CD4-positive, alpha-beta memory T cell (primary cell): ENCODE measurements at regions of chr5 and their contacts with region 1.

Region 1: DNA sequence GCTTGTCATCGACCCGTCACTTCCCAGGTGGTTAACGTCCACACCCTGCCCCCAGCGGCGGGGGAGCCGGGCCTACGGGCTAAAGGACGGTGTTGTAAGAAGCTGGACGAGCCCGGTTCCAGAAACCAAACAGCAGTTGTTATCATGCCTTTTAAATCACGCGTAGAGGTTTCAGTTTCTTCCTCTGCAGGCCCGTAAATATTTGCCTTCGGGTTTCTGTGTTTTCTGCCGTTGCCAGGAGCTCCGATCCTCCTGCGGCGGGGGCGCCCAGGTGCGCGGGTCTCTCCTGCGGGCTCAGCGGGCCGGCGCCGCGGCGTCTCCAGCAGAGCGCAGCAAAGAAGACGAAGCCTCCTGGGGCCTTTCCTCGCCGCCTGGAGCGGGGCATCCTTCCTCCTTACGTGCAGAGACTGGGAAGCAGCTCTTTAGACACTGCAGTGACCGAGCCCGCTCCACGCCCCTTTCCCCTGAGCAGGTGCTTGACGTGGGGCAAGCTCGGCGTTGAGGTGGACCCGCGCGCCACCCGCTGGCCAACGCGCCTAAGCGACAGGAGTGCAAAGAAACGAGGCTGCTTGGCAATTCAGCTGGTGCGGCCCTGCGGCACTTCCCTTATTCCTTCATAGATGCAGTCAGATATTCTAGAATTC is 21.8 kb upstream of the TTC1 start:
- DNase-seq: peak; percentile 67 to 76 (median 72)
- H3K4me3 ChIP-seq: peak overlapping the region in 1 of 2 donors; percentile 44
- H3K4me3 Mint-ChIP-seq: peak overlapping the region; percentile 52 to 79 (median 72)
- H3K27ac ChIP-seq: no peak overlapping the region
- H3K27ac Mint-ChIP-seq: peak overlapping the region in 4 of 7 donors; percentile 25 to 66 (median 45)
- H3K4me1 ChIP-seq: no peaks in the 10 kb centered on the region
- H3K4me1 Mint-ChIP-seq: peaks cover 0 to 3% (median 0%) of the 10 kb centered on the region in 4 donors
- H3K27me3 ChIP-seq: no peaks in the 10 kb centered on the region
- H3K27me3 Mint-ChIP-seq: peaks cover 14 to 15% of the 10 kb centered on the region in 2 donors

Region 2: DNA sequence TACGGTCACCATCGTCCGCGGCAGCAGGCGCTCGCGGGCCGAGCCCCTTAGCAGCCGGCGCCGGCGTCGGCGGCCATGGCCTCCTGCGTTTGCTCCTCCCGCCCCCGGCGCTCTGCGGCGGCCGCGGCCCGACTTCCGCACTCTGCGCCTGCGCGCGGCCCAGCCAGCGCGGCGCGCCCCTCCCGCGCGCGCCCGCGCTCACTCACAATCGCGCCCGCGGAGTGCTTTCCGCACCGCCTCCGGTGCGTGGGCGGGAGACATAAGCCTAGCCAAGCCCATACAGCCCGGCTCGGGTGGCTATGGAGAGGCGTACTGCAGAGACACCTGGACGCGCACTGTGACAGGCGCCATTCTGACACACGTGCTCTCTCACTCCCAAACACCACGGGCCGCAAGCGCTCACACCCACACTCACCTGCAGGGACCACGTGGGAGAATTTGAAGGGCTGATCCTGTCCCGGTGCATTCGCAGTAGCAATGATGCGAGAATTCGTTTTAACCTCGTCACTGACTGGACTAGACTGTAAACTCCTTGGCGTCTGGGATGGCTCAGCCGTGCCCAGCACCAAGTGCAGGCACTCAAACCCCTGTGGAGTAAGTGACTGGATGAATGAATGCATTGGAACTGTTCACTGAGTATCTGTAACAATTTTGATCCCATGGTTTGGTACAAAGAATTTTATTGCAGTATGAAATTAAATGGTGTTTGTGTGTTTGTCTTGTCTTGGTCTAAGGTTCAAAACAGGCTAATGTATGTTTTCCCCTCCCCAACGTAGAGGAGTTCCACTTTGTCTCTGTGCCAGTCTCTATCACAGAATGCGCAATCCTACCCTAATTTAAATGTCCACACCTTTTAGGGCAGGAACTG is 777.5 kb before region 1 on chr5 and contains the start of gene RNF145:
- CTCF ChIA-PET with region 1: interaction called, 8 read pairs
- POLR2A ChIA-PET with region 1: no interaction called
- intact Hi-C with region 1: loop called (anchors 2 kb)
- DNase-seq: peak; percentile 93 to 96 (median 94)
- H3K4me3 ChIP-seq: peak within 1 kb of the TSS; percentile 82 to 85
- H3K4me3 Mint-ChIP-seq: peak within 1 kb of the TSS; percentile 93 to 99 (median 96)
- H3K27ac ChIP-seq: peak within 1 kb of the TSS; percentile 87
- H3K27ac Mint-ChIP-seq: peak within 1 kb of the TSS; percentile 96 to 100 (median 98)
- H3K4me1 ChIP-seq: peaks cover 33% of the 10 kb centered on the region
- H3K4me1 Mint-ChIP-seq: peaks cover 32 to 55% (median 38%) of the 10 kb centered on the region in 4 donors
- H3K27me3 ChIP-seq: no peaks in the 10 kb centered on the region
- H3K27me3 Mint-ChIP-seq: peaks cover 0 to 1% of the 10 kb centered on the region in 2 donors
- total RNA-seq, gene RNF145: 62.4 to 67.8 TPM

Region 3: GRCh38 chr5:159286420-159287035 is 700.6 kb before region 1 on chr5:
- CTCF ChIA-PET with region 1: interaction called, 90 read pairs
- POLR2A ChIA-PET with region 1: interaction called, 8 read pairs
- intact Hi-C with region 1: no loop called
- DNase-seq: peak in 4 of 5 donors; percentile 29 to 40 (median 33)
- H3K4me3 ChIP-seq: no peak overlapping the region
- H3K4me3 Mint-ChIP-seq: no peak overlapping the region
- H3K27ac ChIP-seq: no peak overlapping the region
- H3K27ac Mint-ChIP-seq: no peak overlapping the region
- H3K4me1 ChIP-seq: no peaks in the 10 kb centered on the region
- H3K4me1 Mint-ChIP-seq: no peaks in the 10 kb centered on the region
- H3K27me3 ChIP-seq: no peaks in the 10 kb centered on the region
- H3K27me3 Mint-ChIP-seq: no peaks in the 10 kb centered on the region

Region 4: GRCh38 chr5:159341914-159342313 is 645.2 kb before region 1 on chr5:
- CTCF ChIA-PET with region 1: interaction called, 13 read pairs
- POLR2A ChIA-PET with region 1: no interaction called
- intact Hi-C with region 1: no loop called
- DNase-seq: peak; percentile 74 to 92 (median 79)
- H3K4me3 ChIP-seq: no peak overlapping the region
- H3K4me3 Mint-ChIP-seq: peak overlapping the region in 7 of 8 donors; percentile 28 to 88 (median 47)
- H3K27ac ChIP-seq: no peak overlapping the region
- H3K27ac Mint-ChIP-seq: peak overlapping the region; percentile 79 to 98 (median 87)
- H3K4me1 ChIP-seq: peaks cover 66% of the 10 kb centered on the region
- H3K4me1 Mint-ChIP-seq: peaks cover 54 to 89% (median 67%) of the 10 kb centered on the region in 4 donors
- H3K27me3 ChIP-seq: no peaks in the 10 kb centered on the region
- H3K27me3 Mint-ChIP-seq: no peaks in the 10 kb centered on the region

Region 5: GRCh38 chr5:159515909-159516415 is 471.2 kb before region 1 on chr5:
- CTCF ChIA-PET with region 1: interaction called, 5 read pairs
- POLR2A ChIA-PET with region 1: no interaction called
- intact Hi-C with region 1: loop called (anchors 5 kb)
- DNase-seq: peak; percentile 41 to 59 (median 56)
- H3K4me3 ChIP-seq: no peak overlapping the region
- H3K4me3 Mint-ChIP-seq: peak overlapping the region in 2 of 8 donors; percentile 30 to 71
- H3K27ac ChIP-seq: no peak overlapping the region
- H3K27ac Mint-ChIP-seq: no peak overlapping the region
- H3K4me1 ChIP-seq: no peaks in the 10 kb centered on the region
- H3K4me1 Mint-ChIP-seq: peaks cover 5 to 8% (median 8%) of the 10 kb centered on the region in 4 donors
- H3K27me3 ChIP-seq: no peaks in the 10 kb centered on the region
- H3K27me3 Mint-ChIP-seq: no peaks in the 10 kb centered on the region

Region 6: GRCh38 chr5:159864885-159865691 is 122.1 kb before region 1 on chr5:
- CTCF ChIA-PET with region 1: no interaction called
- POLR2A ChIA-PET with region 1: no interaction called
- intact Hi-C with region 1: no loop called
- DNase-seq: no peak
- H3K4me3 ChIP-seq: no peak overlapping the region
- H3K4me3 Mint-ChIP-seq: no peak overlapping the region
- H3K27ac ChIP-seq: no peak overlapping the region
- H3K27ac Mint-ChIP-seq: no peak overlapping the region
- H3K4me1 ChIP-seq: no peaks in the 10 kb centered on the region
- H3K4me1 Mint-ChIP-seq: no peaks in the 10 kb centered on the region
- H3K27me3 ChIP-seq: no peaks in the 10 kb centered on the region
- H3K27me3 Mint-ChIP-seq: peaks cover 12 to 23% of the 10 kb centered on the region in 2 donors

Region 7: DNA sequence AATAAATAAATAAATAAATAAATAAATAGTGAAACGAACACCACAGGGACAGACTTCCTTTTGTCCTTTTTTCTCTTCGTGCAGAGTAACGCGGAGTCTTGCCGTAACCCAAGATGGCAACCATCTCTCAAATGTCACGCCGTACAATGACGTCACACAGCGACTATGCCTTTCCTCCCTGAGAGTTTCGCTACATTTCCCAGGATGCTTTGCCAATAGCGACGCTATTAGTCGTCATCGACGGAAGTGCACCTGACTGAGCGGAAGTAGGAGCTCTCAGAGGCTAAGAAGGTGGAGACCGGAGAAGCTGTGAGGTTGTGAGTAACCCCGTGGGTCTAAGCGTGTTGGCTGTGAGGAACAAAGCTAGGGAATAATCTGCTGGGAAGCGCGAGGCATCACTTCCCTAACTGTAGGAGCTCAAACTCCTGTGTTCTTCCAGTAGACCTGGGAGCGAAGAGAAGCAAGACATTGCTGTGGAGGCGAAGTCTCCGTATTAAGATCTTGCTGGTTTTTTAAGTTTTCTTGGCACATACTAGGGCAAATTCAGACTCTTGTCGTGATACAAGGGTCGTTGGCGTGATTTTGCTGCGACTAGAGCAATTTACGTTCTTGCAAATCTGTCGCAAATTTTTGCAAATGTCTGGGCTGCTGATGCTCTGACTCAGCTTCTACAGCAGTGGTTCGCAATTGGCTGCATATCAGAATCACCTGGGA is 21.9 kb after region 1 on chr5 and contains the start of gene TTC1:
- CTCF ChIA-PET with region 1: interaction called, 18 read pairs
- POLR2A ChIA-PET with region 1: interaction called, 6 read pairs
- intact Hi-C with region 1: no loop called
- DNase-seq: peak; percentile 89 to 96 (median 94)
- H3K4me3 ChIP-seq: peak within 1 kb of the TSS; percentile 85 to 96
- H3K4me3 Mint-ChIP-seq: peak within 1 kb of the TSS; percentile 94 to 100 (median 96)
- H3K27ac ChIP-seq: peak within 1 kb of the TSS; percentile 76
- H3K27ac Mint-ChIP-seq: peak within 1 kb of the TSS; percentile 88 to 99 (median 98)
- H3K4me1 ChIP-seq: peaks cover 30% of the 10 kb centered on the region
- H3K4me1 Mint-ChIP-seq: peaks cover 24 to 35% (median 29%) of the 10 kb centered on the region in 4 donors
- H3K27me3 ChIP-seq: no peaks in the 10 kb centered on the region
- H3K27me3 Mint-ChIP-seq: no peaks in the 10 kb centered on the region
- total RNA-seq, gene TTC1: 47.5 to 47.9 TPM

Region 8: DNA sequence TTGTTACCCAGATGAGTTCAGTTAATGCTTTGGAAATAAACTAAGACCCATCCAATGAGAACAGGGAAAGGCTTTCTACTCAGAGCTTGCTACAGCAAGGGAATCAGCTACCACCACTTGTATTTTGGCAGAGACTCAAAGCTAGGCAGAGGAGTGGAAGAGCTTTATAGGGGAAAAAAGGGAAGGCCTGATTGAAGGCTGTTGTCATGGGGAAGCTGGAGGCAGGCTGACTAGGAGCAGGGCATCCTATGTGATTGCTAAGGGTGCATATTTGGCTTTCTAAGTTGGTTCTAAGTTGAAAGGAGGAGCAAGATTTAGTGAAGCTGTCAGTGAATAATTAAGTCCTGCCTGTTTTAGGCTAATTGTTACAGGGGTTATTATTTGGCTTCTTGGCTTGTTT is 550.0 kb after region 1 on chr5:
- CTCF ChIA-PET with region 1: no interaction called
- POLR2A ChIA-PET with region 1: no interaction called
- intact Hi-C with region 1: no loop called
- DNase-seq: no peak
- H3K4me3 ChIP-seq: no peak overlapping the region
- H3K4me3 Mint-ChIP-seq: no peak overlapping the region
- H3K27ac ChIP-seq: no peak overlapping the region
- H3K27ac Mint-ChIP-seq: no peak overlapping the region
- H3K4me1 ChIP-seq: no peaks in the 10 kb centered on the region
- H3K4me1 Mint-ChIP-seq: no peaks in the 10 kb centered on the region
- H3K27me3 ChIP-seq: no peaks in the 10 kb centered on the region
- H3K27me3 Mint-ChIP-seq: no peaks in the 10 kb centered on the region